ENCODE measurements at regions of chr16 and their contacts with region 1.

Region 1: GRCh38 chr16:50152807-50153452 is at the start of gene TENT4B:
- DNase-seq: peak; percentile 79
- H3K4me3 ChIP-seq: peak within 1 kb of the TSS; percentile 72 to 91
- H3K27ac ChIP-seq: peak within 1 kb of the TSS; percentile 93 to 96
- H3K4me1 ChIP-seq: no peaks in the 10 kb centered on the region
- H3K27me3 ChIP-seq: no peaks in the 10 kb centered on the region
- CTCF ChIP-seq: peak in 1 of 4 experiments; percentile 4
- POLR2A ChIP-seq: peak; percentile 75
- total RNA-seq, gene TENT4B: 11.5 to 15.1 TPM

Region 2: GRCh38 chr16:50210266-50211038 is 57.5 kb after region 1 on chr16:
- intact Hi-C with region 1: loop called (anchors 5 kb)
- DNase-seq: peak; percentile 85
- H3K4me3 ChIP-seq: no peak overlapping the region
- H3K27ac ChIP-seq: no peak overlapping the region
- H3K4me1 ChIP-seq: peaks cover 3% of the 10 kb centered on the region
- H3K27me3 ChIP-seq: no peaks in the 10 kb centered on the region
- CTCF ChIP-seq: peak; percentile 20 to 76 (median 60)
- POLR2A ChIP-seq: no peak

Region 3: DNA sequence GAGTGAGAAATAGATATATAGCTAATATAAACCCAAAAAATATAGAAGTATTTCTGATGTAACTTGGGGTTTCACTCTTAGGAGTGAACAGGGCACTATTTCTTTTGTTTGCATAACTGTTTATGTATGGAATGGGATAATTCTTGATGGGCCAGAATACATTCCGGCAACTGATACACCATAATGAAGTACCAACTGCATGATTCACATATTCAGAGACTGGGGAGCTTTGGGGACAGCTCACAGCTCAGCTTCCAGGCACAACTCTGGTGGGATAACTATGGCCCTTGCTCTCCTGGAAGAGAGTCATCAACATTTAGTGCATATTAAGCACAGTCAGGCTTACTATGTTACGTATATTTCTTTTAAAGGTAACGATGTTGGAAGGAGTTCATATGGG is 71.4 kb after region 1 on chr16:
- intact Hi-C with region 1: no loop called
- DNase-seq: no peak
- H3K4me3 ChIP-seq: no peak overlapping the region
- H3K27ac ChIP-seq: no peak overlapping the region
- H3K4me1 ChIP-seq: no peaks in the 10 kb centered on the region
- H3K27me3 ChIP-seq: no peaks in the 10 kb centered on the region
- CTCF ChIP-seq: no peak
- POLR2A ChIP-seq: no peak

Measured in prostate gland (tissue), 2 donors.